GM10248 (cell line): ENCODE measurements at regions of chr12 and their contacts with region 1.

Region 1: GRCh38 chr12:49580572-49581535 is 12.9 kb upstream of the MCRS1 start:
- DNase-seq: peak; percentile 79
- CTCF ChIP-seq: peak; percentile 91

Region 2: GRCh38 chr12:49342066-49342913 is 238.6 kb before region 1 on chr12:
- CTCF ChIA-PET with region 1: interaction called, 25 read pairs
- POLR2A ChIA-PET with region 1: no interaction called
- DNase-seq: peak; percentile 87
- CTCF ChIP-seq: peak; percentile 81

Region 3: GRCh38 chr12:49553512-49554088 is 27.3 kb before region 1 on chr12:
- CTCF ChIA-PET with region 1: interaction called, 51 read pairs
- POLR2A ChIA-PET with region 1: no interaction called
- DNase-seq: peak; percentile 67
- CTCF ChIP-seq: peak; percentile 56

Region 4: DNA sequence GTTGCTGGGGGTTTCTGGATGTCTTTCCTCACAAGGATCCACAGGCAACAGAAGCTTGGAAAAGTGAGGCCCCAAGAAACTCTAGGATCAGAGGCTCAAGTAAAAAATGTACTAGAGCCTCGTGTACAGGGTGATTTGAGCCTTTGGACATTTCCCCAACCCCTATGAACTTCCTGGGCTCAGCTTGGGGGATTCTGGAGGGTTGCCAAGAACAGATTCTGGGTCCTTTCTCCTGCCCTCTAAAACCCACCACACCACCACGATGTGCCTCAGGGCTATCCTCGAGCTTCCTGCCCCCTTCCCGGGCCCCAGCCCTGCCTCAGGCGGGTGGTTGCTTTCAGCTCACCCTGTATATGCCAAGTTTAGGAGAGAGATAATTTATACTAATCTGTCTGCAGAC is 24.0 kb after region 1 on chr12:
- CTCF ChIA-PET with region 1: interaction called, 42 read pairs
- POLR2A ChIA-PET with region 1: no interaction called
- DNase-seq: no peak
- CTCF ChIP-seq: no peak

Region 5: DNA sequence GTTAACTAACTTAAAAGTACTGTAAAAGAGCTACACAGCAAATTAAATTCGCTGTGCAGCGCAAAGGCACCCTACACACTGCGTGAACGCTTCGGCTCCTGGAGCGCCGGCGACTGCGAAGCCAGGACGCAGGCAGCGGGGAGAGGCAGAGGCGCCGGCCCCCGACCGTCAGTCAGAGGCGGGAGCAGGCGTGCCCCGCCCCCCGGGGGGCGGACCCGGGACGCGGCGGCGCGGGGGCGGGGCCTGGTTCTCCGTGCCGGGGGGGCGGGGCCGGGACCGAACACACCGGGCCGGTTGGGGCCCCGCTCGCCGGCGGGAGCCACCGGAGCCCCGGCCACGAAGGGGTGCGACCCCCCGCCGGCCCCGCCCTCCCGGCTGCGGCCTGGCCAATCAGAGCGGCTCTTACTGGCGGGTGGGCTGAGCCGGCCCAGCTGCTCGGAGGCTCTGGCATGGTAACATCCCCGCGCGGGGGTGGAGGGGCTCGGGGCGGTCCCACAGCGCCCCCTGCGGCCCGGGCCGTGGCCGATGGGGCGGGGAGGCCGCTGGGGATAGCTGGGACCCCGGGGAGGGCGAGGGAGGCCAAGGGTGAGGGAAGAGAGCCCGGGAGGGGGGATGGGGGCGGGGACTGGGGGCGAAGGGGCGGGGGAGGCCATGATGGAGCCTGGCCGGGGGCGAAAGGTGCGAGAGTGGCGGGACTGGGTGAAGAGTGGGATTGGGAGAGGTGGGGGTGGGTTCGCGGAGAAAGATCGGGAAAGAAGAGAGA is 42.5 kb after region 1 on chr12 and contains the start of gene PRPF40B:
- CTCF ChIA-PET with region 1: interaction called, 54 read pairs
- POLR2A ChIA-PET with region 1: interaction called, 3 read pairs
- DNase-seq: peak; percentile 96
- CTCF ChIP-seq: peak; percentile 70